ENCODE measurements at regions of chr7 and their contacts with region 1.

Region 1: GRCh38 chr7:36473454-36474282 is 84.0 kb downstream of the ANLN start:
- DNase-seq: peak in 4 of 9 experiments; percentile 13 to 25 (median 18)
- ATAC-seq: no peak
- H3K4me3 ChIP-seq: no peak overlapping the region
- H3K4me3 Mint-ChIP-seq: no peak overlapping the region
- H3K27ac ChIP-seq: no peak overlapping the region
- H3K27ac Mint-ChIP-seq: no peak overlapping the region
- H3K4me1 ChIP-seq: no peaks in the 10 kb centered on the region
- H3K4me1 Mint-ChIP-seq: peaks cover 9% of the 10 kb centered on the region
- H3K27me3 ChIP-seq: no peaks in the 10 kb centered on the region
- H3K27me3 Mint-ChIP-seq: no peaks in the 10 kb centered on the region
- CTCF ChIP-seq: no peak

Region 2: GRCh38 chr7:36109013-36109627 is 364.5 kb before region 1 on chr7:
- CTCF ChIA-PET with region 1: no interaction called
- POLR2A ChIA-PET with region 1: no interaction called
- intact Hi-C with region 1: no loop called
- DNase-seq: no peak
- ATAC-seq: no peak
- H3K4me3 ChIP-seq: no peak overlapping the region
- H3K4me3 Mint-ChIP-seq: no peak overlapping the region
- H3K27ac ChIP-seq: no peak overlapping the region
- H3K27ac Mint-ChIP-seq: no peak overlapping the region
- H3K4me1 ChIP-seq: no peaks in the 10 kb centered on the region
- H3K4me1 Mint-ChIP-seq: no peaks in the 10 kb centered on the region
- H3K27me3 ChIP-seq: no peaks in the 10 kb centered on the region
- H3K27me3 Mint-ChIP-seq: no peaks in the 10 kb centered on the region
- CTCF ChIP-seq: no peak

Region 3: DNA sequence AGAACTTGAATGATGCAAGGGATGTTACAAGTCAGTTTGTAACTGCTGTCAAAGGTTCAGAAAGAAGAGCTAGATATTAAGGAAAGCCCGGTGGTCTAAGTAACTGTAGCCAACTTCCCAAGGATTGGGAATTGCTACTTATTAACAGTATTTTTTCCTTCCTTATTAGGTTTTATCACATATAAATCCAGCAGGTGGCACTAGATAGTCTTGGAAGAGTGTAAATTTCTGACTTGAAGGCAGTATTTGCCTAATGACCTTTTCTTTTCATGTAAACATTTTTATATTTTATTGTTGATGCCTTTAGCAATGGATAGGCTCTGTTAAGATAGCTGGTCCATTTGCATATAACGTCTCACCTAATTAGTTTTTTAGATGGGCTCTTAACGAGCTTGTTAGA is 32.8 kb before region 1 on chr7:
- CTCF ChIA-PET with region 1: interaction called, 12 read pairs
- POLR2A ChIA-PET with region 1: no interaction called
- intact Hi-C with region 1: no loop called
- DNase-seq: peak in 2 of 9 experiments; percentile 17 to 34
- ATAC-seq: no peak
- H3K4me3 ChIP-seq: no peak overlapping the region
- H3K4me3 Mint-ChIP-seq: no peak overlapping the region
- H3K27ac ChIP-seq: no peak overlapping the region
- H3K27ac Mint-ChIP-seq: no peak overlapping the region
- H3K4me1 ChIP-seq: no peaks in the 10 kb centered on the region
- H3K4me1 Mint-ChIP-seq: no peaks in the 10 kb centered on the region
- H3K27me3 ChIP-seq: no peaks in the 10 kb centered on the region
- H3K27me3 Mint-ChIP-seq: no peaks in the 10 kb centered on the region
- CTCF ChIP-seq: no peak

Measured in CD8-positive, alpha-beta T cell (primary cell).